ENCODE measurements at regions of chr11 and their contacts with region 1.

Region 1: GRCh38 chr11:41612415-41612814 is 153.0 kb upstream of the LRRC4C start:
- DNase-seq: peak; percentile 15
- H3K4me3 ChIP-seq: no peak overlapping the region
- H3K27ac ChIP-seq: no peak overlapping the region
- H3K4me1 ChIP-seq: peaks cover 7% of the 10 kb centered on the region
- H3K27me3 ChIP-seq: no peaks in the 10 kb centered on the region
- CTCF ChIP-seq: peak; percentile 55 to 75

Region 2: DNA sequence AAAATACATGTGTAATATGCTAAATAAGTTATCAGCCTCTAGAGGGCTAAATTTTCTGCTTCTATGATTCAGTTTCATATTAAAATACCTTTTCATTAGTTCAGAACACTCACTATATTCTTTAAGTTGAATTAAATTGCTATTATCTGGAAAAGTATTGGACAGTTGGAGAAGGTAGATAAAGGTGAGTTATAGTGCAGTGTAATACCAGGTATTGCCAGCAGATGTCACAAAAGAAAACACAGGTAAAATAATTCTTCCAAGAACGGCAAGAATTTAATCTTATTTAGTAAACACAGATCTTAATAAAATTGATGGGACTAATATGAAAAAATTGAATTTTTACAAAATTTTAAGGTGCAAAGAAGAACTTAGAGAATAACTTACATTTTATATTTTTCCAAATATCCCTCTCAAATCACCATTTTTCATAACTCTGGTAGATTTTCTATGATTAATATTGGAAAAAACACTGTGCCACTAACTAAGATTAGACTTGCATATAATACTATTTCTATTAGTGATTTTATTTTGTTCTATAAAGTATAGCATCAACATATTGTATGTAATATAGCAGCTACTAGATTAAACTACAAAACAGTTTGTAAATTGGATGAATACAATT is 151.2 kb before region 1 on chr11:
- CTCF ChIA-PET with region 1: no interaction called
- dilution Hi-C with region 1: no loop called
- in situ Hi-C with region 1: no loop called
- intact Hi-C with region 1: loop called (anchors 1 kb)
- DNase-seq: peak; percentile 9
- H3K4me3 ChIP-seq: no peak overlapping the region
- H3K27ac ChIP-seq: no peak overlapping the region
- H3K4me1 ChIP-seq: no peaks in the 10 kb centered on the region
- H3K27me3 ChIP-seq: peaks cover 18% of the 10 kb centered on the region
- CTCF ChIP-seq: peak; percentile 71 to 75

Region 3: GRCh38 chr11:41498726-41499125 is 113.7 kb before region 1 on chr11:
- CTCF ChIA-PET with region 1: no interaction called
- dilution Hi-C with region 1: no loop called
- in situ Hi-C with region 1: no loop called
- intact Hi-C with region 1: loop called (anchors 1 kb)
- DNase-seq: no peak
- H3K4me3 ChIP-seq: no peak overlapping the region
- H3K27ac ChIP-seq: no peak overlapping the region
- H3K4me1 ChIP-seq: peaks cover 10% of the 10 kb centered on the region
- H3K27me3 ChIP-seq: no peaks in the 10 kb centered on the region
- CTCF ChIP-seq: peak; percentile 46 to 51

Region 4: GRCh38 chr11:41714101-41714500 is 101.7 kb after region 1 on chr11:
- CTCF ChIA-PET with region 1: no interaction called
- dilution Hi-C with region 1: no loop called
- in situ Hi-C with region 1: no loop called
- intact Hi-C with region 1: no loop called
- DNase-seq: no peak
- H3K4me3 ChIP-seq: no peak overlapping the region
- H3K27ac ChIP-seq: no peak overlapping the region
- H3K4me1 ChIP-seq: no peaks in the 10 kb centered on the region
- H3K27me3 ChIP-seq: no peaks in the 10 kb centered on the region
- CTCF ChIP-seq: no peak

Region 5: DNA sequence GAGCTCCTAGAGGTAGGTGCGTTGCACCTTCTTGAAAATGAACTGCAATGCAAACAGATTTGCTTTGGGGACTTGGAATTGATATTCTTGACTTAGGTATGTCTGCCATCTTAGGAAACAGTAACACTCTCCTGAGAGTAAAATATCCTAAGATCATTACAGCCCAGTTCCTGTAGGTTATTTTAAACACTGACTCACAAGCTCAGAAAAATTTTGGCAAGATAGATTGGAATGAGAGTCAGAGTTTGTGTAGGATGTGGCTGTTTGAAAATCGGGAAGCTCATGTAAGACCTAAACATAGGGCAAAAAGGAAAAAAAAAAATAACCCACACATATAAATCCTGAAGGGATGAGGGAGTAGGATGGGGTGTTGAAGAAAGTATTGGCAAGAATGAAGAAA is 224.0 kb after region 1 on chr11:
- CTCF ChIA-PET with region 1: no interaction called
- dilution Hi-C with region 1: no loop called
- in situ Hi-C with region 1: no loop called
- intact Hi-C with region 1: no loop called
- DNase-seq: no peak
- H3K4me3 ChIP-seq: no peak overlapping the region
- H3K27ac ChIP-seq: no peak overlapping the region
- H3K4me1 ChIP-seq: no peaks in the 10 kb centered on the region
- H3K27me3 ChIP-seq: no peaks in the 10 kb centered on the region
- CTCF ChIP-seq: no peak